RWPE1 (cell line): ENCODE measurements at regions of chr10 and their contacts with region 1.

Region 1: GRCh38 chr10:103685880-103686669 is 169.3 kb downstream of the SH3PXD2A start:
- DNase-seq: peak; percentile 79
- H3K27ac ChIP-seq: peak overlapping the region; percentile 52
- CTCF ChIP-seq: peak; percentile 87

Region 2: GRCh38 chr10:103618575-103619423 is 67.3 kb before region 1 on chr10:
- CTCF ChIA-PET with region 1: interaction called, 10 read pairs
- POLR2A ChIA-PET with region 1: no interaction called
- DNase-seq: no peak
- H3K27ac ChIP-seq: peak overlapping the region; percentile 29
- CTCF ChIP-seq: no peak

Region 3: DNA sequence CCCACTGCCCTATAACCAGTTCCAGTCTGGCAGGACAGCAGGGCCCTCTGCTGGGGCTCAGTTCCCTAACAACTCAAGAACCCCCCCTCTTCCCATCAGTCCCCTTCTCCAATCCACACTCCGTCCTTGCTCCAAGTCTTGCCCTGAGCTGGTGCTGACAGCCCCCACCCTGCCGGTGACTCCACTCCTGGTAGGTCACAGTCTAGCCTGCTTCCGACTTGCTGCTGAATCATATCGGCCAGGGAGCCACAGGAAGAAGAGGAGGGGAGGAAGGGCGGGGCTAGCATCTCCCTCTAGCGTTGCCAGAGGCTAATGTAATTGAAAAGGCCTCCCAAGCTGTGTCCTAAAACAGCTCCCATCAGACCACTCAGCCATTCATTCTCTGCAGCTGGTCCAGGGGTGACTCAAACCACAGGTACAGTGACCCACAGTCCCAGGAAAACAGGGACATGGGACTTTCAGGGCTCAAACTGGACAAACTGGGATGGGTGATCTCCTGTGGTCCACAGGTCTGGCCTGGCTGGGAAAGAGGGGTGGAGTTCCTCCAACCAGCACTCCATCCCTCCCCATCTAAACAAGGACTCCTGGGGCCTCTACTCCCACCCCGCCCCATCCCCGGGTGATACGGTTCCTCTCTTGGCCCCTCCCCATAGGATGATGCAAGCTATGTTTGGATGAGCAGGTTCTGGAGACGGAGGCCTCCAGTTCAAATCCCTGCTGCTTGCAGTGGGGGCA is 10.5 kb after region 1 on chr10:
- CTCF ChIA-PET with region 1: interaction called, 13 read pairs
- POLR2A ChIA-PET with region 1: no interaction called
- DNase-seq: peak; percentile 98
- H3K27ac ChIP-seq: peak overlapping the region; percentile 84
- CTCF ChIP-seq: no peak; the same call in 1 of the 2 replicates